Head of caudate nucleus (tissue), 42 donors: ENCODE measurements at regions of chr10 and their contacts with region 1.

Region 1: DNA sequence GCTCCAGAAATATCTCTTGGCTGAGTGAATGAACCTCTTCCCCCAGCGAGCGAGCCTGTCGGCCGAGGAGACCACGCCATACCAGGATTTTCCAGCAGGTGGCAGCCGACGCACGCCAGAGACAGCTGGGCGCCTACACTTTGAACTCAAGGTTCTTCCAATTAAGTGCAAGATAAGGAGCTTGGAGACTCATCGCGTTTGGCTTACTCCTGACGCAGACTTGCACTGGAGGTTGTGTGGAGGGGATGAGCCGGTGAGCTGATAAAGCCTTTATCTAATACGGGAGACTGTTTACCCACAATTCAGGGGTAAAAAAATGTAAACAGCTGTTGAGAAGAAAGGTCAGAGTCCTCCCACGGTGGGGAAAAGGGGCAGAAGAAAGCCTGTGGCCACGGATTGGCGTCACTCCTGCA is 45.9 kb upstream of the EMX2 start:
- DNase-seq: peak; percentile 61 to 90 (median 79)

Region 2: DNA sequence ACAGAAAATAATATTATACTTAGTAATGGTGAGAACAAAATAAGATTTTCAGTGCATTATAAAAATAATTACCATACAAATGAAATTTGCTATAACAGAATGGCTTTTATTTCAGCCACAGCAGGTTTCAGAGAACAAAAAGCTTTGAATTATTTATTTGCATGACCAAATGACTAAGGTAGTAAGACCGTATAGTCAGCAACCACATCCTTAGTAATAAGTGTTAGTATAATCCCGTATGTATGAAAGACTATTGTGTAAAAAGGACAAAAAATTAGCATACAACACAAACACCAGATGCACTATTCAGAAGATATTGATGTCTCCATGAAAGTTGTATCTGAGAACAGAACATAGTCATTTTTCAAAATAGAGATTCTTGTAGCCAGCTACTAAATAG is 133.6 kb before region 1 on chr10:
- intact Hi-C with region 1: no loop called
- DNase-seq: no peak

Region 3: DNA sequence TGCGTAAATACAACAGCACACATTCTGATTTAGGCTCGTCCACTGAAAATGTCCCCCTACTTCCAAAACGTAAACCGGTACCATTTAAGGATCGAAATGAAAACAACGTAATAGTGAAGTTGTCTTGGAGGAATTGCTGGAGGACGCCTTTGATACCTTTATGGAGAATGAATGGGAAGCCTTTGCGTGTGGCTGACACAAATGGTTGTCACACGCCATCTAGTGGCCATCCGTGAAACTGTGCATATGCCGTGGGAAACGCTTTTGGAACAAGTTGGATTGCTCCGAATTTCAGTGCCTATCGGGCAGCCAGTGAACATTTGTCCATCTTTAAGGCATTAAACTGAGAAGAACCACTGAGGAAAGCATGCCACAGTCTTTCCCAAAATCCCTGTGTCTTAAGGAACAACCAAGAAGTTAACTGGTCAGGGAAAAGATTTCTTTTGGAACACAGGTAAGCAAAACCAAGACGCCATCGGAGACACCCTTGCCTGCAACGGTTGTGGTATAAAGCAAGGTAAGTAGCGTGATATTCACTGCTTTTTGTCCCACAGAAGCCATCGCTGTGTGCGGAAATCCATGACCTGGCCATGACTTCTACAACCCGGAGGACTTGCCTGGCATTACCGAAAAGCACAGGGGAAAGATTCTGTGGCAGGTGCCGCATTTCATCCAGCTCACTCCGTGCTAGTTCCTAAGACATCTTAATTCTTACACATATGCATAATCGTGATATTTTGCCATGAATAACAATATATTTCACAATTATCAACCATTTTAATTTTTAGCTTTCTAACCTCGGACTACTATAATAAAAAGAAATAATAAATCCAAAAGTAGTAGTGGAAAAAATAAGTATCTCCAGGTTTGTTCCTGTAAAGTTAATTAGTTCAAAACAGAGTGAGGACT is 744.9 kb after region 1 on chr10:
- intact Hi-C with region 1: loop called (anchors 5 kb)
- DNase-seq: peak; percentile 45 to 94 (median 86)